Gastrocnemius medialis (tissue), 4 donors: ENCODE measurements at regions of chr1 and their contacts with region 1.

Region 1: GRCh38 chr1:184563308-184563707 is 176.5 kb downstream of the C1orf21 start:
- DNase-seq: no peak
- ATAC-seq: no peak
- H3K4me3 ChIP-seq: no peak overlapping the region
- H3K27ac ChIP-seq: peak overlapping the region; percentile 91 to 97 (median 95)
- H3K4me1 ChIP-seq: peaks cover 33 to 42% of the 10 kb centered on the region in 2 donors
- H3K27me3 ChIP-seq: no peaks in the 10 kb centered on the region
- CTCF ChIP-seq: peak; percentile 31 to 62 (median 45)
- POLR2A ChIP-seq: no peak

Region 2: GRCh38 chr1:183670178-183670577 is 893.1 kb before region 1 on chr1:
- in situ Hi-C with region 1: no loop called
- intact Hi-C with region 1: no loop called
- DNase-seq: no peak
- ATAC-seq: no peak
- H3K4me3 ChIP-seq: no peak overlapping the region
- H3K27ac ChIP-seq: no peak overlapping the region
- H3K4me1 ChIP-seq: no peaks in the 10 kb centered on the region
- H3K27me3 ChIP-seq: no peaks in the 10 kb centered on the region
- CTCF ChIP-seq: no peak
- POLR2A ChIP-seq: no peak

Region 3: DNA sequence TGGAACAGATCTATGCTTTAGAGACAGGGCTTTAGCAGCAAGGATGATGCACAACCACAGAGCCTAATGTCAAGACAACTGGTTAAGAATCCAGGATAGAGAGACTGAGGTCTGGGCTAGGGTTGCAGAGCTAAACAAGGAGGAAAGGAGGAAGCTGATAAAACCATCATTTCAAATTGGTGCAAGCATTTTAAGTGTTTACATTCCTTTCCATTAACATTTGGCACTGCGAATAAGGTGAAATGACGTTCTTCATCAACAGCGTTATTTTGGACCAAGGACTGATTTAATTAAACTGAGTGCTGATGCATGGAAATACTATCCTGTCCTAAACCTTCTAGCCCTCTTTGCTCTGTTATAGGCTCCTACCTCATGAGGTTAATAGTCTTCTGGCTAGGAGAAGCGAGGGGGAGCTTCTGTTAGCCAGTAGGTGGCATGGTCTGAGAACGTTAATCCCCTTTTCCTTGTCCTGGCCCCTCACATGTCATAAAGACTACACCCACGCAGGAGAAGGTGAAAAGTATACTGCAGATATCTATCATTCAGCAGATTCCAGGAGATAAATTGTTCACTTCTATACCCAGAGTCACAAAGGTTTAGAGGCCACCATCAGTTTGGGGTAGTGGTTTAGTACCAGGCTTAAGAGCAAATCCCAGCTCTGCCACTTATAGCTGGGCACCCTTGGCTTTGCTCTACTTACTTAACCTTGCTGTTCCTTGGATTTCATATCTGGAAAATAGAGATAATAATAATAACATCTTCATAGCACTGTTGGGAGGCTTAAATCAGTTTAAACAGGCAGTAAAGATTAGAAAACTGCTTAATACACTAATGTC is 184.0 kb before region 1 on chr1:
- in situ Hi-C with region 1: loop called in 3 of 4 experiments (anchors 25 kb)
- intact Hi-C with region 1: loop called (anchors 2 kb)
- DNase-seq: no peak
- ATAC-seq: peak in 1 of 2 donors; percentile 60
- H3K4me3 ChIP-seq: no peak overlapping the region
- H3K27ac ChIP-seq: no peak overlapping the region
- H3K4me1 ChIP-seq: no peaks in the 10 kb centered on the region
- H3K27me3 ChIP-seq: no peaks in the 10 kb centered on the region
- CTCF ChIP-seq: peak in 4 of 5 experiments; percentile 21 to 50 (median 27)
- POLR2A ChIP-seq: no peak

Region 4: GRCh38 chr1:184483101-184483683 is 80.1 kb before region 1 on chr1:
- in situ Hi-C with region 1: no loop called
- intact Hi-C with region 1: no loop called
- DNase-seq: peak; percentile 88 to 94
- ATAC-seq: peak; percentile 86 to 88
- H3K4me3 ChIP-seq: no peak overlapping the region
- H3K27ac ChIP-seq: peak overlapping the region; percentile 90 to 96 (median 91)
- H3K4me1 ChIP-seq: peaks cover 84 to 88% of the 10 kb centered on the region in 2 donors
- H3K27me3 ChIP-seq: no peaks in the 10 kb centered on the region
- CTCF ChIP-seq: peak in 2 of 5 experiments; percentile 20 to 21
- POLR2A ChIP-seq: peak in 1 of 2 donors; percentile 15

Region 5: GRCh38 chr1:184494929-184495328 is 68.4 kb before region 1 on chr1:
- in situ Hi-C with region 1: no loop called
- intact Hi-C with region 1: loop called (anchors 5 kb)
- DNase-seq: no peak
- ATAC-seq: no peak
- H3K4me3 ChIP-seq: peak overlapping the region in 1 of 4 donors; percentile 17
- H3K27ac ChIP-seq: peak overlapping the region; percentile 90 to 96 (median 91)
- H3K4me1 ChIP-seq: peaks cover 95 to 99% of the 10 kb centered on the region in 2 donors
- H3K27me3 ChIP-seq: no peaks in the 10 kb centered on the region
- CTCF ChIP-seq: no peak
- POLR2A ChIP-seq: no peak

Region 6: GRCh38 chr1:184622136-184622823 is 59.0 kb after region 1 on chr1:
- in situ Hi-C with region 1: loop called in 1 of 4 experiments (anchors 10 kb)
- intact Hi-C with region 1: no loop called
- DNase-seq: peak; percentile 90 to 92
- ATAC-seq: peak; percentile 79 to 83
- H3K4me3 ChIP-seq: no peak overlapping the region
- H3K27ac ChIP-seq: peak overlapping the region; percentile 87 to 97 (median 88)
- H3K4me1 ChIP-seq: peaks cover 74 to 84% of the 10 kb centered on the region in 2 donors
- H3K27me3 ChIP-seq: no peaks in the 10 kb centered on the region
- CTCF ChIP-seq: no peak
- POLR2A ChIP-seq: peak; percentile 22 to 61

Region 7: GRCh38 chr1:184878002-184878401 is 314.7 kb after region 1 on chr1:
- in situ Hi-C with region 1: no loop called
- intact Hi-C with region 1: no loop called
- DNase-seq: no peak
- ATAC-seq: no peak
- H3K4me3 ChIP-seq: no peak overlapping the region
- H3K27ac ChIP-seq: peak overlapping the region in 1 of 4 donors; percentile 39
- H3K4me1 ChIP-seq: peaks cover 26 to 31% of the 10 kb centered on the region in 2 donors
- H3K27me3 ChIP-seq: no peaks in the 10 kb centered on the region
- CTCF ChIP-seq: no peak
- POLR2A ChIP-seq: no peak